Common myeloid progenitor, CD34-positive (primary cell): ENCODE measurements at regions of chr10 and their contacts with region 1.

Region 1: GRCh38 chr10:78047314-78047891 is 13.7 kb downstream of the RPS24 start:
- DNase-seq: peak; percentile 82 to 91 (median 84)
- H3K4me3 ChIP-seq: no peak overlapping the region
- H3K27ac ChIP-seq: no peak overlapping the region
- H3K4me1 ChIP-seq: peaks cover 0 to 7% (median 2%) of the 10 kb centered on the region in 4 experiments
- H3K27me3 ChIP-seq: no peaks in the 10 kb centered on the region

Region 2: DNA sequence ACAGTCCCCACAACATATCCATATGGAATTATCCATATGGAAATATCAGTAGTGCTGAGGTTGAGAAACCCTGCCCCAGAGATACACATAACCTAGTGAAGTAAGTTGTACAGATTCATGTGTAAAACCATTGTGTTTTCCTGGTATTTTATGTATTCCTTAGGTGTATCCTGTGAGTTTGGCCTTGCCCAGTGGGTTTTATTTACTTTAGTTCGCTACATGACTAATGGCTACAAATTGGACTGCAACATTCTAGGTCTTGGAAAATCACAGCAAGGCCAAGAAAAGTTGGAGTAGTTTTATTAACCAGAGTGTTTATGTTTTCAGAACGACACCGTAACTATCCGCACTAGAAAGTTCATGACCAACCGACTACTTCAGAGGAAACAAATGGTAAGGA is 12.4 kb before region 1 on chr10:
- CTCF ChIA-PET with region 1: interaction called, 23 read pairs
- POLR2A ChIA-PET with region 1: interaction called, 3 read pairs
- DNase-seq: no peak
- H3K4me3 ChIP-seq: peak overlapping the region in 6 of 7 experiments; percentile 72 to 100 (median 94)
- H3K27ac ChIP-seq: peak overlapping the region; percentile 46 to 84
- H3K4me1 ChIP-seq: peaks cover 11 to 37% (median 26%) of the 10 kb centered on the region in 4 experiments
- H3K27me3 ChIP-seq: no peaks in the 10 kb centered on the region

Region 3: DNA sequence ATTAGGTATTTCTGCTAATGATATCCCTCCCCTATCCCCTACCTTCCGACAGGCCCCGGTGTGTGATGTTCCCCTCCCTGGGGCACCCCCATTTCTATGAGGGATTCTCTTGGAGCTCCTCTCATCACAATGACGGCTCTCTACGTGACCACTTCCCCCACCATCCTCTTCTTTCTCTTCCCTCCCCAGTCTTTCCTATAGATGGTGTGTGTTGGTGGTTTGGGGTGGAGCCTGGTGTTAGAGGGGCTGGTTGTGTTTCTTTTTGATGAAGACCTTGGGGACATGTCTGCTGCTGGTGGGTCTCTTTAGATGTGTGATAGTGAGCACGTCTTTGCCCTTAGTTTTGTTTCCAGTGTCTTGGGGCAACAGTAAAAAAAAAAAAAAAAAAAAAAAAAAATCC is 14.9 kb after region 1 on chr10:
- CTCF ChIA-PET with region 1: interaction called, 22 read pairs
- POLR2A ChIA-PET with region 1: no interaction called
- DNase-seq: peak in 1 of 3 donors; percentile 13
- H3K4me3 ChIP-seq: no peak overlapping the region
- H3K27ac ChIP-seq: no peak overlapping the region
- H3K4me1 ChIP-seq: peaks cover 0 to 7% (median 2%) of the 10 kb centered on the region in 4 experiments
- H3K27me3 ChIP-seq: no peaks in the 10 kb centered on the region

Region 4: DNA sequence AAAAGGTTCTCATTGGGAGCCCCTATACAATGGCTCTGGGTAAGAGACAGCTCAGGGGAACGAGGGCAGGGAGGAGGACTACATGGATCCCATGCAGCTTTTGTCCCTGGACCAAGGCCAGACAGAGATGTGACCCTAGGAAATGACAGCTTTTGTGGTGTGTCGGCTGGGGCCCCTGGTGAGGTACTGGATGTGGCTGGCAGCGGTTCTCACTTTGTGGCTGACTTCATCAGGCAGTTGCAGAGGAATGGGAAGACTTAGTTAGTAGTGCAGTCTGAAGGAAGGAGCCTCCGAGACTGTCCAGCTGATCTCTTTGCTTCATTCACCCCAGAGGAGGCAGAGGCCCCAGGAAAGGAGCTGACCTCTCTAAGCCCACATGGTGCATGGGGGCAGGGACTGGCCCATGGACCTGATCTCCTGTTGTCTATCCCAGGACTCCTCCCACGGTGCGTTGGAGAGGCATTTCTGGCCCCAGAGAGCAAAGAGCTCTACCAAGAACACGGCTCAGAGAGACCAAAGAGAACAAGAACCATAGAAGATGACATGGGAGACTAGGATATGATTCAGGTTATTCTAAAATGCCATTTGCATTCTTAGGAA is 189.1 kb after region 1 on chr10:
- CTCF ChIA-PET with region 1: no interaction called
- POLR2A ChIA-PET with region 1: no interaction called
- DNase-seq: peak; percentile 76 to 91 (median 90)
- H3K4me3 ChIP-seq: peak overlapping the region in 1 of 7 experiments; percentile 26
- H3K27ac ChIP-seq: no peak overlapping the region
- H3K4me1 ChIP-seq: peaks cover 6 to 20% (median 14%) of the 10 kb centered on the region in 4 experiments
- H3K27me3 ChIP-seq: no peaks in the 10 kb centered on the region

Region 5: GRCh38 chr10:78335691-78336401 is 288.4 kb after region 1 on chr10:
- CTCF ChIA-PET with region 1: no interaction called
- POLR2A ChIA-PET with region 1: no interaction called
- DNase-seq: no peak
- H3K4me3 ChIP-seq: no peak overlapping the region
- H3K27ac ChIP-seq: no peak overlapping the region
- H3K4me1 ChIP-seq: no peaks in the 10 kb centered on the region
- H3K27me3 ChIP-seq: peaks cover 0 to 2% (median 0%) of the 10 kb centered on the region in 5 experiments

Region 6: DNA sequence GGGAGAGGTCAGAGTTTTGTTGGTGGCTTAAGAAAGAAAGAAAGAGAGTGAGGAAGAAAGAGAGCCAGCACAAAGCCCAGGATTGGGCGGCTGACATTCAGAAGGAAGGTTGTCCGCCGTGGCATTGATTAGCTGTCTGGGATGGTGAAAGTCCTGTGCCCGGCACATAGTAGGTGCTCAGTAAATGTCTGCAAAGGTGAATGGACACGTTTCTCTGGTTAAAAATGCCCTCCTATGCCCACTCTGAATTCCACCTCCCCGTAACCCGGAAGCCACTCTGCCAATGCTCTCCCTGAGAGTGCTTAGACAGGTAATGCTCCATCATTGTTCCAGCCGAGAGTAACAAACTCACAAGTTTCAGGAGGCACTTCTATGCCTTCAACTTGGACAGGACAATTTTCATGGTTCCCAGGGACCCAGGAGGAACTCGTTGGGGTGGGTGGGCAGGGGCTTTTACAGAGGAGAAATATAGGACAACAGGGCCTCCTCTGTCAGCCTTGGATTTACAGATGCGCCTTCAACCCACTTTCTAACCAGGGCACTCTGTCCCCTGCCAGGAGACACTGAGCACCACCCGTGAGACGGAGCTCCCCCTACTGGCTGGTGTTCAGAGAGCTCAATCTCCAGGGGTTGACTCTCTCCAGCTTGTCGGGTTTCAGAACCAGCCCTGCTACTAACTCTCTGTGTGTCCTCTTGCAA is 609.9 kb after region 1 on chr10:
- CTCF ChIA-PET with region 1: interaction called, 10 read pairs
- POLR2A ChIA-PET with region 1: no interaction called
- DNase-seq: peak; percentile 64 to 82 (median 72)
- H3K4me3 ChIP-seq: no peak overlapping the region
- H3K27ac ChIP-seq: no peak overlapping the region
- H3K4me1 ChIP-seq: peaks cover 0 to 9% (median 1%) of the 10 kb centered on the region in 4 experiments
- H3K27me3 ChIP-seq: peaks cover 0 to 7% (median 0%) of the 10 kb centered on the region in 5 experiments

Region 7: GRCh38 chr10:79202188-79203013 is 1155.0 kb after region 1 on chr10:
- CTCF ChIA-PET with region 1: interaction called, 15 read pairs
- POLR2A ChIA-PET with region 1: no interaction called
- DNase-seq: peak; percentile 68 to 82 (median 81)
- H3K4me3 ChIP-seq: no peak overlapping the region
- H3K27ac ChIP-seq: no peak overlapping the region
- H3K4me1 ChIP-seq: no peaks in the 10 kb centered on the region
- H3K27me3 ChIP-seq: no peaks in the 10 kb centered on the region